ENCODE measurements at regions of chr1 and their contacts with region 1.

Region 1: GRCh38 chr1:151739590-151740375 is 18.5 kb downstream of the RIIAD1 start:
- DNase-seq: no peak
- H3K4me3 ChIP-seq: no peak overlapping the region
- H3K27ac ChIP-seq: no peak overlapping the region
- H3K4me1 ChIP-seq: no peaks in the 10 kb centered on the region
- H3K27me3 ChIP-seq: peaks cover 37% of the 10 kb centered on the region
- CTCF ChIP-seq: no peak

Region 2: GRCh38 chr1:150352866-150353265 is 1386.9 kb before region 1 on chr1:
- CTCF ChIA-PET with region 1: no interaction called
- POLR2A ChIA-PET with region 1: no interaction called
- intact Hi-C with region 1: no loop called
- DNase-seq: no peak
- H3K4me3 ChIP-seq: no peak overlapping the region
- H3K27ac ChIP-seq: no peak overlapping the region
- H3K4me1 ChIP-seq: no peaks in the 10 kb centered on the region
- H3K27me3 ChIP-seq: no peaks in the 10 kb centered on the region
- CTCF ChIP-seq: no peak

Region 3: DNA sequence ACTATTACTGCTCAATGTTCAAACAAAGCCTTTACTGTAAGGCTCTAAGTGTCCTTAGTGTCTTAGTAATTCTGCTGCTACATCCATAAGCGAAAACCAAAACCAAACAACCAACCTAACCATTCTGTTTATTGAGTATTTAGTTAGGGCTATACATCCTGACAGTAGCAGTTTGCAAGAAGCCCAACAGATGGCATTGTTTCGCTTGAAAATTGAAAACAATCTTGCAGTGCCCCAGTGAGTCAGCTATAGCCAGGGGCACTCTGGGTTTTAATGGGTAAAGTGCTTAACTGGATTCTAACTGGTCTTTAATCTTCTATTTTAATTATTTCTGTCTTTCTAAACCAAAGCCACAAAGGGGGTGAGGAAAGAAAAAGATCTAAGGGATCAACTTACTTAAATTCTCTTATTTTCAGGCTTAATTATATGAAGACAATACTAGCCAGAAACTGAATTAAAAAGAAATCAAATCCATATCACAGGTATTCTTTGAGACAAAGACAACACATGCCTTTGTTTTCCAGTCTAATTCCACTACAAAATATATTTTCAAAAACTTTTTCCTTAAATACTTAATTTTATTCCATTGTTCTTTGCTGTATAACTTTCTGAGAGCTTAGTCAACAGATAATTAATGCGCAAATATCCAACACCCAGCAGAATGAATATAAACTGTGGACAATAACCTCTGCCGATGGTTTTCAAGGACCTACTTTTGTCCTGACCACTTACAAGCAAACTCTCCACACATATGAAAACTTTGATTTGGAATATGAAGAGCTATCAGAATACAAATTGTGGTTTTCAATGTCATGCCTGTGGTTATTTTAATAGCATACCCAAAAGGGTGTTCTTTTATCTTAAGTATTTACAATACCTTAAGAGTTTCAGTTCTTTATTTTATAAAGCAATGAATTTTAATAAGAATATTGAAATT is 295.7 kb before region 1 on chr1:
- CTCF ChIA-PET with region 1: interaction called, 6 read pairs
- POLR2A ChIA-PET with region 1: no interaction called
- intact Hi-C with region 1: loop called (anchors 2 kb)
- DNase-seq: peak; percentile 87
- H3K4me3 ChIP-seq: no peak overlapping the region
- H3K27ac ChIP-seq: peak overlapping the region; percentile 39
- H3K4me1 ChIP-seq: peaks cover 20% of the 10 kb centered on the region
- H3K27me3 ChIP-seq: no peaks in the 10 kb centered on the region
- CTCF ChIP-seq: peak; percentile 87

Region 4: GRCh38 chr1:151534665-151535278 is 205.0 kb before region 1 on chr1:
- CTCF ChIA-PET with region 1: interaction called, 4 read pairs
- POLR2A ChIA-PET with region 1: no interaction called
- intact Hi-C with region 1: loop called (anchors 2 kb)
- DNase-seq: peak; percentile 71
- H3K4me3 ChIP-seq: no peak overlapping the region
- H3K27ac ChIP-seq: no peak overlapping the region
- H3K4me1 ChIP-seq: peaks cover 8% of the 10 kb centered on the region
- H3K27me3 ChIP-seq: no peaks in the 10 kb centered on the region
- CTCF ChIP-seq: peak; percentile 98

Region 5: DNA sequence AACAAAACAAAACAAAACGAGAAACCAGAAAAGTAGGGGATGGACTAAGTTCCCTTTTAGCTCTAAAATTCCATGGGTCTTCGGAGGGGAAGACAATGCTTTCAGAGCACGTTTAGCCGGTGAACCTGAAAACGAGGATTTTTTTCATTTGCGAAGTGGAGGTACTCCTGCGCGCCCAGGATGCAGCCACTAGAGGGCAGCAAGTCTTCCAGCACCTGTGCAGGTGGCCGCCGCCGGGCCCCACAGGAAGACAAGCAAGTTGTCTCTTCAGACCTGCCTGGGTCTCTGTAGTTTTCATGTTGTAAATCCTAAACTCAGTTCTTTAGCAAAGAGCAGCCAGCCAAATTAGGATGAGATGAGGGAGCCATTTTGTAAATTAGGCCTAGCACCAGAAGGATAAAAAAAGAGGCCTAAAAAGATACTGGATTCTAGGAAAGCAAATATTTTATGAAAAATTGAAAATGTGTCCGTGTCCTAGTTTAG is 145.6 kb before region 1 on chr1:
- CTCF ChIA-PET with region 1: interaction called, 4 read pairs
- POLR2A ChIA-PET with region 1: no interaction called
- intact Hi-C with region 1: loop called (anchors 5 kb)
- DNase-seq: peak; percentile 50
- H3K4me3 ChIP-seq: peak overlapping the region; percentile 20
- H3K27ac ChIP-seq: no peak overlapping the region
- H3K4me1 ChIP-seq: peaks cover 6% of the 10 kb centered on the region
- H3K27me3 ChIP-seq: no peaks in the 10 kb centered on the region
- CTCF ChIP-seq: peak; percentile 99